IMR-90 (cell line): ENCODE measurements at regions of chr12 and their contacts with region 1.

Region 1: GRCh38 chr12:78392918-78393317 is 471.7 kb upstream of the SYT1 start:
- DNase-seq: peak; percentile 30
- ATAC-seq: peak; percentile 63; the same call in 1 of the 2 replicates
- H3K4me3 ChIP-seq: no peak overlapping the region
- H3K27ac ChIP-seq: no peak overlapping the region
- H3K4me1 ChIP-seq: no peaks in the 10 kb centered on the region
- H3K27me3 ChIP-seq: no peaks in the 10 kb centered on the region; the same call in 1 of the 2 replicates
- CTCF ChIP-seq: peak; percentile 40
- POLR2A ChIP-seq: no peak
- RAD21 ChIP-seq: peak; percentile 53

Region 2: GRCh38 chr12:77847060-77847541 is 545.8 kb before region 1 on chr12:
- CTCF ChIA-PET with region 1: no interaction called
- POLR2A ChIA-PET with region 1: no interaction called
- dilution Hi-C with region 1: no loop called
- in situ Hi-C with region 1: no loop called
- intact Hi-C with region 1: no loop called
- DNase-seq: peak; percentile 1
- ATAC-seq: no peak
- H3K4me3 ChIP-seq: no peak overlapping the region
- H3K27ac ChIP-seq: no peak overlapping the region
- H3K4me1 ChIP-seq: no peaks in the 10 kb centered on the region
- H3K27me3 ChIP-seq: peaks cover 6% of the 10 kb centered on the region
- CTCF ChIP-seq: no peak
- POLR2A ChIP-seq: no peak
- RAD21 ChIP-seq: no peak

Region 3: DNA sequence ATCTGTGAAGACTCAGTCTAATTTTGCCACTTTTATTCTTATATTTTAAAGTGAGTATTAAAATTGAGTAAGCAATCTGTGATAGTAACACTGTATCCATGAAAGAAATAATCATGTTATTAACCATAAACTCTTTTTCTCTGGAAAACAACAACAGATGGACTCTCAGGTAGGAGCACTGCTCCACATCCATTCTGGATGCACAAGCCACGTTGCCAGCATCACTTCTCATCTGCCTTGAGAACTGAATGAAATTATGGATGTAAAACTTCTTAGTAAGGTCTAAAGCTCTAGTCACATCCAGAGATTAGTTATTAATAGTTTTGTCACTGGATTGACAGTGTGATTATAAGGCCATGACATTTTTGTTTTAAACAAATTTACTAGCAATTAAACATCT is 17.5 kb before region 1 on chr12:
- CTCF ChIA-PET with region 1: no interaction called
- POLR2A ChIA-PET with region 1: interaction called, 10 read pairs
- dilution Hi-C with region 1: no loop called
- in situ Hi-C with region 1: no loop called
- intact Hi-C with region 1: no loop called
- DNase-seq: no peak
- ATAC-seq: no peak
- H3K4me3 ChIP-seq: no peak overlapping the region
- H3K27ac ChIP-seq: no peak overlapping the region
- H3K4me1 ChIP-seq: no peaks in the 10 kb centered on the region
- H3K27me3 ChIP-seq: no peaks in the 10 kb centered on the region
- CTCF ChIP-seq: no peak
- POLR2A ChIP-seq: no peak
- RAD21 ChIP-seq: no peak

Region 4: GRCh38 chr12:78584695-78585531 is 192.0 kb after region 1 on chr12:
- CTCF ChIA-PET with region 1: no interaction called
- POLR2A ChIA-PET with region 1: no interaction called
- dilution Hi-C with region 1: no loop called
- in situ Hi-C with region 1: no loop called
- intact Hi-C with region 1: loop called (anchors 5 kb)
- DNase-seq: peak; percentile 6
- ATAC-seq: no peak
- H3K4me3 ChIP-seq: no peak overlapping the region
- H3K27ac ChIP-seq: no peak overlapping the region
- H3K4me1 ChIP-seq: no peaks in the 10 kb centered on the region
- H3K27me3 ChIP-seq: no peaks in the 10 kb centered on the region
- CTCF ChIP-seq: peak; percentile 13; the same call in 1 of the 2 replicates
- POLR2A ChIP-seq: no peak
- RAD21 ChIP-seq: peak; percentile 41; the same call in 1 of the 2 replicates

Region 5: GRCh38 chr12:78951803-78952538 is 559.1 kb after region 1 on chr12:
- CTCF ChIA-PET with region 1: no interaction called
- POLR2A ChIA-PET with region 1: no interaction called
- dilution Hi-C with region 1: no loop called
- in situ Hi-C with region 1: no loop called
- intact Hi-C with region 1: no loop called
- DNase-seq: no peak
- ATAC-seq: no peak
- H3K4me3 ChIP-seq: no peak overlapping the region
- H3K27ac ChIP-seq: no peak overlapping the region
- H3K4me1 ChIP-seq: no peaks in the 10 kb centered on the region
- H3K27me3 ChIP-seq: no peaks in the 10 kb centered on the region
- CTCF ChIP-seq: no peak
- POLR2A ChIP-seq: no peak
- RAD21 ChIP-seq: no peak

Region 6: DNA sequence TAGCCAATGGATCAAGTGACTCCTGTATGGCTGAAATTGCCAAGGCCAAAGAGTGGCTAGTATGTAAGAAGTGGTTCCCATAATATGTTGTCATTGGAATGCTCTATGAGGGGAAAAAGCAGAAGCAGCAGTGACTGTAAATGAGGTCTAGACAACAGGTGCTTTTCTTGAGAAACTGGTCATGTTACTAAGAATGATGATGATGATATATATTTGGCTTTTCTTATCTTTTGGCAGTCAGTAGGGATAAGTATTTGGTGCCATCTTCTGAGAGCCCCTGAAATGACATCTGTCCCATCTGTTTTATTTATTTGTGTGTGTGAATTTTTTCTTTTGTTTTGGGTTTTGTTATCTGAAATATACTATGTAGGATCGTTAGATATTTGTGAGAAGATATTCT is 613.4 kb after region 1 on chr12:
- CTCF ChIA-PET with region 1: no interaction called
- POLR2A ChIA-PET with region 1: no interaction called
- dilution Hi-C with region 1: no loop called
- in situ Hi-C with region 1: no loop called
- intact Hi-C with region 1: loop called (anchors 10 kb)
- DNase-seq: peak; percentile 21
- ATAC-seq: no peak
- H3K4me3 ChIP-seq: no peak overlapping the region
- H3K27ac ChIP-seq: no peak overlapping the region
- H3K4me1 ChIP-seq: no peaks in the 10 kb centered on the region
- H3K27me3 ChIP-seq: no peaks in the 10 kb centered on the region
- CTCF ChIP-seq: peak; percentile 51
- POLR2A ChIP-seq: no peak
- RAD21 ChIP-seq: peak; percentile 63

Region 7: DNA sequence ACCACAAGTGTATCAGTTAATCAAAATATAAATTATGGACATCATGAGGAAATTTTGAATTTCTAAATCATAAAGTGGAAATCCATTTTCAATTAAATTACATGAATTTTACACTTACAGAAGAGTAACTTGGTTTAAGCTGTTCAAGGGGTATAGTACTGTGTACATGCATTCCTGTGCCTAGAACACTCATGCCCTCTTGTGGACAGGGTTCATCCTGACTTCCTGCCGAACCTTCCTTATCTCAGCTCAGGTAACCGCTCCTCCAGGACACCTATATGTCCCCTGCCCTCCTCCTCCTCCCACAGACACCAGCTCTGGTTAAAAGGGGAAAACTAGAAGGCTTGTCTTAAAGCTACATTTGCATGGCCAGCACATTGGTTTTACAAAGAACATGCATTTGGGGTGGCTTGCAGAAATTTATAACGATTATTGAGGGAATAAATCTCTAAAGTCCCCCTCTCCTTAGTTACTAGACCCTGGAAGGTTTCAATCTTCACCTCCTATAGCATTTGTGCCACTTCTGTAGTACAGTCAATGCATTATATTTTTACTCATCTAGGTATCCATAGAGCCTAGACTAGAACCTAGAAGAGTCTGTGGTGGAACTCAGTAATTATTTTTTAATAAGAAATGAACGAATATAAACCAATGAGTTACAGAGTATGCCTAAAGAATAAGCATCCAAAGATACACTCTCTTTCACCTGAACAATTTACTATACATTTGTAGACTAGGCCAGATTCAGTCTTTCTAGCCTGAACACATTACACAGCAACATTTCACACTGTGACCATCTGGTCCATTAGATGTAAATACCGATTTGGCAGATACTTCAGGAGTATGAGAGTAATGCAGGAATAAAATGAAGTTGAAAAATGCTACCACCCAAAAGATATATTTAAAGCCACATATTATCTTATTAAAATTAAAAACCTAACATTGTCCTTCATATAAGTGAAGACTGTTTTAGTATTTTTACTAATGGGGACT is 952.2 kb after region 1 on chr12:
- CTCF ChIA-PET with region 1: no interaction called
- POLR2A ChIA-PET with region 1: no interaction called
- dilution Hi-C with region 1: no loop called
- in situ Hi-C with region 1: no loop called
- intact Hi-C with region 1: loop called (anchors 2 kb)
- DNase-seq: peak; percentile 50
- ATAC-seq: peak; percentile 86
- H3K4me3 ChIP-seq: no peak overlapping the region
- H3K27ac ChIP-seq: no peak overlapping the region
- H3K4me1 ChIP-seq: no peaks in the 10 kb centered on the region
- H3K27me3 ChIP-seq: no peaks in the 10 kb centered on the region; the same call in 1 of the 2 replicates
- CTCF ChIP-seq: peak; percentile 57
- POLR2A ChIP-seq: no peak
- RAD21 ChIP-seq: peak; percentile 78